ENCODE measurements at regions of chr1 and their contacts with region 1.

Region 1: DNA sequence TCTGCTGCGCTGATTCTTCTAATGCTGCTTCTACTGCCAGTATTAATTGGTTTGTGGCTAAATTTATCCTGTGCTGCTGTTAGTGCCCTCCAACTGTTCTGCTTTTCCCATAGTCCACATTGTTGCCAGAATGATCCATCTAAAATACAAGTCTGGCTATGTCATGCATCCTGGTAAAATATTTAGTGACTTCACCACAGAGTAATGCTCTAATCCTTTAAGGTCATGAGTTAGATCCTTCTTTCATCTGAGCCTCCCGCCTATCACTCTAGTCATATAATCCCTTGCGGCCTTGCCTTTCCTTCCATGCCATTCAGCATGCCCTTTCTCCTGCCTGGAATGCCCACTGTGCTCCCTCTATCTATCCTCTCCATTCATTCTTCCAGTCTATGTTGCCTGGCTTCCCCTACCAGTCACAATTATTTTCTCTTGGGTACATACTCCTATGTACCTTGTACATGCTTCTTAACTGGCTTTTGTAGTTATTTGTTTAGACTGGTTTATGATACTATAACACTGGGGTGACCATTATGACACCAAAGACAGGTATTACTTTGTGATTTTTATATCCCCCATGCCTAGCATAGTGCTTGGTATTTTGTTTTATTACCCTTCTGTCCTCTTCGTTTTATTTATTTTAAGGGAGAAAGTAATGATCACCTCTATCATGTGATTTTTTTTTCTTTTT is 144.0 kb downstream of the MAGI3 start:
- DNase-seq: peak; percentile 20
- H3K4me3 ChIP-seq: no peak overlapping the region
- H3K27ac ChIP-seq: no peak overlapping the region
- H3K4me1 ChIP-seq: no peaks in the 10 kb centered on the region
- H3K27me3 ChIP-seq: no peaks in the 10 kb centered on the region
- CTCF ChIP-seq: no peak

Region 2: GRCh38 chr1:113389953-113390834 is 144.1 kb before region 1 on chr1 and contains the start of gene MAGI3:
- CTCF ChIA-PET with region 1: no interaction called
- dilution Hi-C with region 1: no loop called
- in situ Hi-C with region 1: no loop called
- intact Hi-C with region 1: loop called (anchors 2 kb)
- DNase-seq: peak; percentile 99
- H3K4me3 ChIP-seq: peak within 1 kb of the TSS; percentile 68 to 97 (median 74)
- H3K27ac ChIP-seq: peak within 1 kb of the TSS; percentile 71
- H3K4me1 ChIP-seq: peaks cover 14% of the 10 kb centered on the region
- H3K27me3 ChIP-seq: no peaks in the 10 kb centered on the region
- CTCF ChIP-seq: no peak
- total RNA-seq, gene MAGI3: 8.5 to 10.3 TPM

Measured in mammary epithelial cell (primary cell).